Endothelial cell of umbilical vein (primary cell): ENCODE measurements at regions of chr7 and their contacts with region 1.

Region 1: GRCh38 chr7:74272305-74273038 is 16.7 kb upstream of the CLIP2 start:
- DNase-seq: peak; percentile 90
- H3K4me3 ChIP-seq: no peak overlapping the region
- H3K27ac ChIP-seq: peak overlapping the region; percentile 88
- H3K4me1 ChIP-seq: peaks cover 16% of the 10 kb centered on the region
- H3K27me3 ChIP-seq: no peaks in the 10 kb centered on the region
- CTCF ChIP-seq: no peak
- POLR2A ChIP-seq: no peak

Region 2: GRCh38 chr7:74094224-74095101 is 178.0 kb before region 1 on chr7:
- CTCF ChIA-PET with region 1: no interaction called
- POLR2A ChIA-PET with region 1: no interaction called
- dilution Hi-C with region 1: no loop called
- intact Hi-C with region 1: loop called (anchors 10 kb)
- DNase-seq: peak; percentile 89
- H3K4me3 ChIP-seq: peak overlapping the region in 2 of 3 experiments; percentile 0 to 29
- H3K27ac ChIP-seq: peak overlapping the region; percentile 83
- H3K4me1 ChIP-seq: peaks cover 34% of the 10 kb centered on the region
- H3K27me3 ChIP-seq: no peaks in the 10 kb centered on the region
- CTCF ChIP-seq: no peak
- POLR2A ChIP-seq: peak; percentile 21

Region 3: DNA sequence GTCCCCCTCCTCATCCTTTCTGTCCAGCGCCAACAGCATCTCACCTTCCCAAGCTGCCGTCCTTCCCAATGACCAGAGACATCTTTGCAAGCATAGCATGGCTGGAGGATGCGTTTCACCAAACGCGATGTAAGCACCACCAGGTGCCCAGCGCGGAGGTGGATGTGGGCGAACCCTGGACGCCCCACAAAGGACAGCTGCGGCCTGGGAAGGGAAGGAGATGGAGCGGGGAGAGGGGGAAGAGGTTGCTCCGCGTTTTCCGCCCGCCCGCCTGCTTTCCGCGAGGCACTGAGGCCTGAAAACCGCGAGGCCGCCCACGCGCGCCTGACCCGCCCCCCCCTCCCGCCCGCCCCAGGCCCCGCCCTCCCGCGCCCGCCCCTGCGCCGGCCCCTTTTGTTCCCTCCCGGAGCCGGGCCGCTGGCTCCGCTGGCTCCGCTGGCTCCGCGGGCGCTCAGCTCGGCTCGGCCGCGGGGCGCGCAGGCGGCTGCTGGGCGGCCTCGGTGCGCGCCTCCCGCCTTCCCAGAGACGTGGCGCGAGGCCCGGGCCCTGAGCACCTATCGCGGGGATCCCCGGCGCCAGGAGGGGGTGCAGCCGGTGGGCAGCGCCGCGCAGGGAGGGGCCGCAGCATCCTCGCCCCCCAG is 16.7 kb after region 1 on chr7 and contains the start of gene CLIP2:
- CTCF ChIA-PET with region 1: interaction called, 33 read pairs
- POLR2A ChIA-PET with region 1: interaction called, 3 read pairs
- dilution Hi-C with region 1: no loop called
- intact Hi-C with region 1: loop called (anchors 1 kb)
- DNase-seq: peak; percentile 67
- H3K4me3 ChIP-seq: peak within 1 kb of the TSS; percentile 75 to 90 (median 85)
- H3K27ac ChIP-seq: peak within 1 kb of the TSS; percentile 29
- H3K4me1 ChIP-seq: peaks cover 11% of the 10 kb centered on the region
- H3K27me3 ChIP-seq: no peaks in the 10 kb centered on the region
- CTCF ChIP-seq: no peak
- POLR2A ChIP-seq: peak; percentile 65
- total RNA-seq, gene CLIP2: 37.1 and 38.0 TPM in 2 replicates

Region 4: DNA sequence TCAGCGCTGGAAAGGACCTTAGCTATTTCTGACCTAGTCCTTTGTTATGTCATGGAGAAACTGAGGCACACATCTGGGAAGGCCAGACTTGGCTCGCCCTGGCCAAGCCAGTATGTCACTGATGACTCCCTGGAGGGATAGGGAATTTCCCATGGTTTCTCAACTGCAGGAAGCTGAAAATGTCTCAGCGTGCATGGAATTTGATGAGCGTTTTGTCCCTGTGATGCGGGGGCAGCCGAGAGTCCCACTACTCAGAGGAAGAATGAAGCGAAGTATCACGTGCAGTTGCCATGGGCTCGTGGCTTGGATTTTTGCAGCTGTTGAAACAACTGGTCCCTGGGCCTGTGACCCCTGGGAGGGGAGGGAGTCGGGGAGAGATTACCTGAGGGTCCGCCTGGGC is 61.6 kb after region 1 on chr7:
- CTCF ChIA-PET with region 1: no interaction called
- POLR2A ChIA-PET with region 1: no interaction called
- dilution Hi-C with region 1: no loop called
- intact Hi-C with region 1: no loop called
- DNase-seq: no peak
- H3K4me3 ChIP-seq: no peak overlapping the region
- H3K27ac ChIP-seq: no peak overlapping the region
- H3K4me1 ChIP-seq: no peaks in the 10 kb centered on the region
- H3K27me3 ChIP-seq: no peaks in the 10 kb centered on the region
- CTCF ChIP-seq: no peak
- POLR2A ChIP-seq: no peak

Region 5: DNA sequence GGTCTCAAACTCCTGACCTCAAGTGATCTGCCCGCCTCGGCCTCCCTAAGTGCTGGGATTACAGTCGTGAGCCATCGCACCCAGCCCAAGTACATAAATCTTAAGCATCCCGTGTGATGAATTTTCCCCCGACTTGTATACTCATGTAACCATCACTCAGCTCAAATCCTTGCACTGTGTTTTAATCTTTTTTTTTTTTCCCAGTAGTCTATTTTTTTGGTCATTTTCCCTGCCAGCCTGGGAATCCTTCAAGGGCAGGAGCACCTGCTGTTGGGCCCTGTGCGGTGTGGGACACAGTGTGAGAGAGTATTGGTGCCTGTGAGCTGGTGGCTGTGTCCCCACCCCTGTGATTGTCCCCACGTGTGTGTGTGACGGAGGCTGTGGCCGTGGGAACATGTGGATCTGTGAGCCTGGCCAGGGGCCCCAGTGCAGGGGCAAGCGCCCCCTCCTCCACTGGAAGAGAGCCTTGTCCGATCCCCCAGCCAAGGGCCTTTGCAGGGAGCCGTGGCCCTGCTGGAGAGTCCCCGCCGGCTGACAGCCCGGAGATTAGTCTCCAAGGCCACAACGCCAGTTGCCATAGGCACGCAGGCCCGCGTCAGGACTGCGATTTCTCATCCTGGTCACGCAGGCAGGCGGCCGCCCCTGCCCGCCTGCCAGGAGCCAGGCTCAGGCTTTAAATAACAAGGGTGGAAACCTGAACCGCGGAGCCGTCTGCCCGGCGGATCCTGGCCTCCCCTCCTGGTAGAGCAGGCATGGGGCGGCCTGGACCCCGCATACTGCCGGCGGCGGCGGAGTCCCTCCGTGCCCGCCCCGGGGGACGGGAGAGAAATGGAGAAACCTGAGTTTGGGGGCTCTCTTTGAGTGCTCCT is 207.7 kb after region 1 on chr7:
- CTCF ChIA-PET with region 1: no interaction called
- POLR2A ChIA-PET with region 1: no interaction called
- dilution Hi-C with region 1: no loop called
- intact Hi-C with region 1: no loop called
- DNase-seq: peak; percentile 82
- H3K4me3 ChIP-seq: peak overlapping the region; percentile 11 to 47 (median 20)
- H3K27ac ChIP-seq: peak overlapping the region; percentile 92
- H3K4me1 ChIP-seq: peaks cover 33% of the 10 kb centered on the region
- H3K27me3 ChIP-seq: no peaks in the 10 kb centered on the region
- CTCF ChIP-seq: no peak
- POLR2A ChIP-seq: no peak